GM12878 (cell line): ENCODE measurements at regions of chr5 and their contacts with region 1.

Region 1: DNA sequence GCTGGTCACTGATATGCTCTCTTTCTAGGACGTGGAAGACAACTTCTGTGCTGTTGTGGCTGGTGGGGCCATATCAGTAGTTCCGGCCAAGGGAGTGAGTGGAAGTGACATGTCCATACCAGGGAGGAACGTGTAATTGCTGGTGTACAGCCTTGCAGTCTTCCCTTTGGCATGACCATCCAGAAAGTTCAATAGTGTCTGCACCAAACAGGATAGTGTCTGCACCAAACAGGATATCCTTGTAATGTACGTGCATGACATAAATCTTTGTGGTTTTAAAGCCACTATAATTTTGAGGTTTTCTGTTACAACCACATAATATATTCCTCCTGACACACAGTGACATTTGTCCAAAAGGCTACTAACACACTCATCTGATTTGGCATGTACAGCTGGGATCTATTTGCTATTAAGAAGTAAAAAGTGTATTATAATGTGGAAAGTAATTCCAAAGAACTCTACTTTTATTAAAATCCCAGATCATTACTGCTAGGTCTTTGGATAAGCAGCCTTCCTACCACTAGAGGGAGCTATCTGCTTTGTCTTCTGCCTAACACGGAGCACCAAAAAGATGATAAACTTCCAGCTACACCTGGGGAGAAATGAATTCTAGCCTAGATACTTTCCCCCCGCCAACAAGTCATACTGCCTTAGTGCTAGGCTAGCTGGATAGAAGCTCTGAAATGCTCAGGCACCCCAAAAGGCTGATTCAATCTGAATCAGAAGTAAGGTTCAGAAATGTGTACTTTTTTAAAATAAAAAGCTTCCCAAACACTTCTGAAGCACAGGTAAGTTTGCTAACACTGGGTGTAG is 52.7 kb downstream of the RNF145 start:
- DNase-seq: peak; percentile 30
- ATAC-seq: peak; percentile 96
- H3K4me3 ChIP-seq: no peak overlapping the region
- H3K27ac ChIP-seq: no peak overlapping the region
- H3K4me1 ChIP-seq: peaks cover 7% of the 10 kb centered on the region
- H3K27me3 ChIP-seq: no peaks in the 10 kb centered on the region
- CTCF ChIP-seq: peak; percentile 79 to 83 (median 82)
- EP300 ChIP-seq: no peak
- POLR2A ChIP-seq: no peak
- RAD21 ChIP-seq: peak; percentile 93

Region 2: DNA sequence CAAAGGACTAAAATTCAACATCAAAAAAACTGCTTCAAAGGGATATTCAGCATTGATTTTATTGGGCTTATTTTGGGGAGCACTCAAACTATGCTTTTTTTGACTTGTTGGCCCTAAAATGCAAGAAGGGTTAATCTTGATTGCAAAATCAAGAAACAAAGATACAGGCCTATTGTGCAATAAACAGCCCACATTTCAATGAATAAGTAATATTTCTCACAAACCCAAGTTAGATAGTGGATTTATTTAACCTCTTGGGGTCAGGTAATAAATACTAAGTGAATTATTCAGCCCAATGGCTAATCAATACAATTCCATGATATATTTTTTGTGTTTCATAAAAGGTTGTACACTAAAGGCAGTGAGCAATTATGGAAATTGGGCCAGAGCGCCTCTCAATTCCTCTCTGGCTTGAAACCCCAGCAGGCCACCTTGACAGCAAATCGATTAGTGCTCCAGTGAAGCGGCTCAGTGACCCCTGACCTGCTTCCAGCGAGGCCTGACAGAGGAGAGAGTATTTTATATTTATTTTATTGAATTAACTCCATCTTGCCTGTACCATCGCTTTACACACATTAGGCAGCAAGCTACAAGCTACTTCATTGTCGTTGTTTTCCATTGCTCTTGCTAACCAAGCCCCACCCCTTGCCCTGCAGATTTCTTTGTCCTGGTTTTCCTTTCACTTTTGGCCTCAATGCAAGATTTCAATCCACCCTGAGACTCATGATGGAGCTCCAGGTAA is 122.4 kb before region 1 on chr5:
- CTCF ChIA-PET with region 1: no interaction called
- POLR2A ChIA-PET with region 1: no interaction called
- RAD21 ChIA-PET with region 1: no interaction called
- SMC1A ChIA-PET with region 1: no interaction called
- in situ Hi-C with region 1: no loop called
- intact Hi-C with region 1: no loop called
- DNase-seq: no peak
- ATAC-seq: peak; percentile 84
- H3K4me3 ChIP-seq: peak overlapping the region; percentile 33
- H3K27ac ChIP-seq: peak overlapping the region; percentile 61
- H3K4me1 ChIP-seq: peaks cover 37% of the 10 kb centered on the region
- H3K27me3 ChIP-seq: no peaks in the 10 kb centered on the region
- CTCF ChIP-seq: no peak
- EP300 ChIP-seq: no peak
- POLR2A ChIP-seq: no peak
- RAD21 ChIP-seq: no peak

Region 3: GRCh38 chr5:159190170-159190569 is 33.5 kb after region 1 on chr5:
- CTCF ChIA-PET with region 1: interaction called, 22 read pairs
- POLR2A ChIA-PET with region 1: no interaction called
- RAD21 ChIA-PET with region 1: interaction called, 4 read pairs
- SMC1A ChIA-PET with region 1: interaction called, 10 read pairs
- in situ Hi-C with region 1: no loop called
- intact Hi-C with region 1: no loop called
- DNase-seq: no peak
- ATAC-seq: no peak
- H3K4me3 ChIP-seq: no peak overlapping the region
- H3K27ac ChIP-seq: no peak overlapping the region
- H3K4me1 ChIP-seq: no peaks in the 10 kb centered on the region
- H3K27me3 ChIP-seq: no peaks in the 10 kb centered on the region
- CTCF ChIP-seq: no peak
- EP300 ChIP-seq: no peak
- POLR2A ChIP-seq: no peak
- RAD21 ChIP-seq: no peak

Region 4: DNA sequence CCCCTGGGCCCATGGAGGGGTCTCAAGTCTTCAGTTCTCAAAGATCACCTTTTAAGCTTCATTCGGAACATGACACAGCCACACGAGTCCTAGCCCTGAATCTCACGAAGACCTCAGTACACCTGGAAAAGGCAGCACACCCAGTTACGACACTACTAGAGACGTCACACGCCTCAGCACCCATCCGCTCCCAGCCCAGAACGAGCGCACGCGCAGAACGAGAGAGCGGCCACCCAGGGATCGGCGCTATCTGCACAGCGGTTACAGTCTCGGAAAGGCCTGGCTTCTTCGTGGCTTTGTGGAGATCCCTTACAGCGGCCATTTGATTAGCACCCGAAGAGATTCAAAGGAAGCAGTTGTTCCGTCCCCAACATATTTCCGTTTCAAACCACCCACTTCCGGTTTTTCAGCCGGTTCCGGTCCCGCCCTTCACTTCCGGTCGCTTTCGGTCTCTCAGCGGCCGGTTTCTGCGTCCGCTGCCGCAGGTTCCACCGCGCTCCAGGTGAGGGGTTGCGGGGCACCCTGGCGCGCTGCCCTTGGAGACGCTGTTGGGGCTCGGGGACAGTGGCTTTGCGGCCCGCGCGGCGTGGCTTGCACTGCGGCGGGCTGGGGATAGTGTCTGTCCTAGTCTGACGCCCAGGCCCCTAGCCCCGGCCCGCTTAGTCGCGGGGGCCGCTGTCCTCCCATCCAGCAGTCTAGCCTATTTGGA is 106.4 kb after region 1 on chr5 and contains the start of gene UBLCP1:
- CTCF ChIA-PET with region 1: interaction called, 5 read pairs
- POLR2A ChIA-PET with region 1: no interaction called
- RAD21 ChIA-PET with region 1: interaction called, 8 read pairs
- SMC1A ChIA-PET with region 1: interaction called, 12 read pairs
- in situ Hi-C with region 1: no loop called
- intact Hi-C with region 1: loop called (anchors 5 kb)
- DNase-seq: peak; percentile 60
- ATAC-seq: peak; percentile 91
- H3K4me3 ChIP-seq: peak within 1 kb of the TSS; percentile 84
- H3K27ac ChIP-seq: peak within 1 kb of the TSS; percentile 97
- H3K4me1 ChIP-seq: no peaks in the 10 kb centered on the region
- H3K27me3 ChIP-seq: no peaks in the 10 kb centered on the region
- CTCF ChIP-seq: no peak
- EP300 ChIP-seq: peak in 1 of 2 experiments; percentile 42; a peak in 1 of 4 replicates
- POLR2A ChIP-seq: peak; percentile 91
- RAD21 ChIP-seq: no peak
- polyA plus RNA-seq, gene UBLCP1: 22.6 to 34.3 TPM

Region 5: GRCh38 chr5:159310511-159310910 is 153.9 kb after region 1 on chr5:
- CTCF ChIA-PET with region 1: interaction called, 216 read pairs
- POLR2A ChIA-PET with region 1: interaction called, 3 read pairs
- RAD21 ChIA-PET with region 1: interaction called, 112 read pairs
- SMC1A ChIA-PET with region 1: interaction called, 131 read pairs
- in situ Hi-C with region 1: loop called (anchors 5 kb)
- intact Hi-C with region 1: no loop called
- DNase-seq: no peak
- ATAC-seq: peak; percentile 89; the same call in 2 of the 3 replicates
- H3K4me3 ChIP-seq: peak overlapping the region; percentile 27; the same call in 1 of the 2 replicates
- H3K27ac ChIP-seq: no peak overlapping the region
- H3K4me1 ChIP-seq: no peaks in the 10 kb centered on the region
- H3K27me3 ChIP-seq: 0 out of 4 replicates have a peak, but pooled peaks cover 0 to 2% of the 10 kb centered on the region in 2 experiments
- CTCF ChIP-seq: no peak
- EP300 ChIP-seq: no peak
- POLR2A ChIP-seq: no peak
- RAD21 ChIP-seq: no peak

Region 6: DNA sequence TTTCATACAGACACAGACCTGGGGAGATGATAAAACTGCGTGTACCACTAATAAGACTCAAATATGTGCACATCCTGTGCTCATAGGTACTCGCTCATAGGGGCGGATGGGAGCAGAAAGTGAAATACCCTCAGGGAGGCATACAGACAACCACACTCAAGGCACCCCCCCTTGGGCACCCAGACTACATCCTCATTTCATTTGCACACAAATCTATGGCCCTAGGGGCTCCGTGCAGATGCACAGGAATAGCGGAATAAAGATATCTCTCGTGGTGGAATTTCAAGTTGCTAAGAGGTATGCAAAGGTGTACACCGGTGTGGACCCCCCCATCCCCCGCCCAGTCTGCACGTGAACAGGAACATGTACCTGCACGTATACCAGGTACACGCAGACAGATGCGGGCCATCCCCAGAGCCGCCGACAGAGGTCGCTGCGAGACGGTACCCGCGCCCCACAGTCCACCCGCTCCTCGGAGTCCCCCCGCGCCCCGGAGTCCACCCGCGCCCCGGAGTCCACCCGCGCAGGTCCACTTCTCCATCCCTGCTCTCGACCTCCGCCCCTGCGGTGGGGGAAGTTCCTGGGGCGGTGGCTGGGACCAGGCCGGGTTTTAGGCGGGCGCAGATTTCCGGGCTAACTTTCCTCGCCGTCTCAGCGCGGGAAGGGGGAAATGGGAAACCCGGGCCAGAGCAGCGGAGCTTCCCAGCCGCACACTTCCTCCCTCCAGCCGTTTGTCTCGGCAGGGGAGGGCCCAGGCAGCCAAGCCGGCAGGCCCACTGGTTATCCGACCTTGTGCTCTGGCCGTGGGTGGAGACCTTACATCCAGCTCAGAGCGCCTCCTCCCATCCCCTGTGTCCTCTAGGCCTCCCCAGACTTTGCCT is 174.7 kb after region 1 on chr5:
- CTCF ChIA-PET with region 1: interaction called, 19 read pairs
- POLR2A ChIA-PET with region 1: no interaction called
- RAD21 ChIA-PET with region 1: interaction called, 6 read pairs
- SMC1A ChIA-PET with region 1: interaction called, 4 read pairs
- in situ Hi-C with region 1: no loop called
- intact Hi-C with region 1: loop called (anchors 5 kb)
- DNase-seq: no peak
- ATAC-seq: peak; percentile 83
- H3K4me3 ChIP-seq: peak overlapping the region; percentile 54
- H3K27ac ChIP-seq: no peak overlapping the region
- H3K4me1 ChIP-seq: peaks cover 10% of the 10 kb centered on the region
- H3K27me3 ChIP-seq: 0 out of 4 replicates have a peak, but pooled peaks cover 0 to 3% of the 10 kb centered on the region in 2 experiments
- CTCF ChIP-seq: peak; percentile 63 to 93 (median 76)
- EP300 ChIP-seq: no peak
- POLR2A ChIP-seq: no peak
- RAD21 ChIP-seq: peak; percentile 56

Region 7: DNA sequence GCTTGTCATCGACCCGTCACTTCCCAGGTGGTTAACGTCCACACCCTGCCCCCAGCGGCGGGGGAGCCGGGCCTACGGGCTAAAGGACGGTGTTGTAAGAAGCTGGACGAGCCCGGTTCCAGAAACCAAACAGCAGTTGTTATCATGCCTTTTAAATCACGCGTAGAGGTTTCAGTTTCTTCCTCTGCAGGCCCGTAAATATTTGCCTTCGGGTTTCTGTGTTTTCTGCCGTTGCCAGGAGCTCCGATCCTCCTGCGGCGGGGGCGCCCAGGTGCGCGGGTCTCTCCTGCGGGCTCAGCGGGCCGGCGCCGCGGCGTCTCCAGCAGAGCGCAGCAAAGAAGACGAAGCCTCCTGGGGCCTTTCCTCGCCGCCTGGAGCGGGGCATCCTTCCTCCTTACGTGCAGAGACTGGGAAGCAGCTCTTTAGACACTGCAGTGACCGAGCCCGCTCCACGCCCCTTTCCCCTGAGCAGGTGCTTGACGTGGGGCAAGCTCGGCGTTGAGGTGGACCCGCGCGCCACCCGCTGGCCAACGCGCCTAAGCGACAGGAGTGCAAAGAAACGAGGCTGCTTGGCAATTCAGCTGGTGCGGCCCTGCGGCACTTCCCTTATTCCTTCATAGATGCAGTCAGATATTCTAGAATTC is 830.5 kb after region 1 on chr5:
- CTCF ChIA-PET with region 1: interaction called, 20 read pairs
- POLR2A ChIA-PET with region 1: no interaction called
- RAD21 ChIA-PET with region 1: interaction called, 17 read pairs
- SMC1A ChIA-PET with region 1: interaction called, 5 read pairs
- in situ Hi-C with region 1: loop called (anchors 10 kb)
- intact Hi-C with region 1: loop called (anchors 1 kb)
- DNase-seq: peak; percentile 8
- ATAC-seq: peak; percentile 99
- H3K4me3 ChIP-seq: peak overlapping the region; percentile 58; the same call in 1 of the 2 replicates
- H3K27ac ChIP-seq: no peak overlapping the region
- H3K4me1 ChIP-seq: no peaks in the 10 kb centered on the region
- H3K27me3 ChIP-seq: peaks cover 3 to 4% of the 10 kb centered on the region in 2 experiments
- CTCF ChIP-seq: peak; percentile 77 to 86 (median 80)
- EP300 ChIP-seq: no peak
- POLR2A ChIP-seq: no peak
- RAD21 ChIP-seq: peak; percentile 75